PC-9 (cell line): ENCODE measurements at regions of chr16 and their contacts with region 1.

Region 1: GRCh38 chr16:67781565-67781921 is 24.8 kb downstream of the RANBP10 start:
- DNase-seq: no peak
- H3K4me3 ChIP-seq: no peak overlapping the region
- H3K27ac ChIP-seq: no peak overlapping the region
- H3K4me1 ChIP-seq: no peaks in the 10 kb centered on the region
- H3K27me3 ChIP-seq: no peaks in the 10 kb centered on the region
- CTCF ChIP-seq: no peak

Region 2: GRCh38 chr16:67760206-67760955 is 21.2 kb before region 1 on chr16:
- CTCF ChIA-PET with region 1: no interaction called
- POLR2A ChIA-PET with region 1: interaction called, 14 read pairs
- intact Hi-C with region 1: no loop called
- DNase-seq: no peak
- H3K4me3 ChIP-seq: no peak overlapping the region
- H3K27ac ChIP-seq: no peak overlapping the region
- H3K4me1 ChIP-seq: no peaks in the 10 kb centered on the region
- H3K27me3 ChIP-seq: no peaks in the 10 kb centered on the region
- CTCF ChIP-seq: no peak

Region 3: GRCh38 chr16:67796099-67796718 is 14.7 kb after region 1 on chr16:
- CTCF ChIA-PET with region 1: interaction called, 12 read pairs
- POLR2A ChIA-PET with region 1: no interaction called
- intact Hi-C with region 1: no loop called
- DNase-seq: no peak
- H3K4me3 ChIP-seq: no peak overlapping the region
- H3K27ac ChIP-seq: no peak overlapping the region
- H3K4me1 ChIP-seq: no peaks in the 10 kb centered on the region
- H3K27me3 ChIP-seq: no peaks in the 10 kb centered on the region
- CTCF ChIP-seq: no peak